ENCODE measurements at regions of chr9 and their contacts with region 1.

Region 1: DNA sequence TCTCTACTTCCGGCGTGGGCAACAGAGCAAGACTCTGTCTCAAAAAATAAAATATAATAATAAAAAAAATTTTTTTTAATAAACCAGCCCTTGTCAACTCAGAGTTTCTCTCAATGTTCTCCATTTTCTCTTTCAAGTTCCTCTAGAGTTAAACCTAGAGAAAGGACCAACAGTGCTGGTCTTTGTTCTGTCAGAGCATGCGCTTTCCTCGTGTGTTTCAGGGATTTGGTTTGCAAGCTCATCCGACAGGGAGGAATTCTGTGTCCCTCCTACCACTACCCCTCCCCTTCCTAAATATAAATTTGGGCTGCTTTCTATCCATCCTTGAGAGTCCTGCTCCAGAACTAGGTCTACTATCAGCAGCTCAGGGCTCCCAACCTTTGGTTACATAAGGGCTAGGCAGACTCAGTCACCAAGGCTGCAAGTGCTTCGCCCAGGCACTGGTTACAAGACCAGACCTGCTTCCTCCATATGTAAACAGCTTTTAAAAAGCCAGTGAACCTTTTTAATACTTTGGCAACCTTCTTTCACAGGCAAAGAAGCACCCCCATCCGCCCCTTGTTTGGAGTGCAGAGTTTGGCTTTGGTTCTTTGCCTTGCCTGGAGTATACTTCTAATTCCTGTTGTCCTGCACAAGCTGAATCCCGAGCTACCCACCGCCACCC is 13.5 kb downstream of the SETX start:
- DNase-seq: no peak
- H3K4me3 ChIP-seq: no peak overlapping the region
- H3K27ac ChIP-seq: no peak overlapping the region
- H3K4me1 ChIP-seq: no peaks in the 10 kb centered on the region
- H3K27me3 ChIP-seq: no peaks in the 10 kb centered on the region
- CTCF ChIP-seq: no peak
- EP300 ChIP-seq: no peak
- POLR2A ChIP-seq: no peak
- RAD21 ChIP-seq: no peak

Region 2: DNA sequence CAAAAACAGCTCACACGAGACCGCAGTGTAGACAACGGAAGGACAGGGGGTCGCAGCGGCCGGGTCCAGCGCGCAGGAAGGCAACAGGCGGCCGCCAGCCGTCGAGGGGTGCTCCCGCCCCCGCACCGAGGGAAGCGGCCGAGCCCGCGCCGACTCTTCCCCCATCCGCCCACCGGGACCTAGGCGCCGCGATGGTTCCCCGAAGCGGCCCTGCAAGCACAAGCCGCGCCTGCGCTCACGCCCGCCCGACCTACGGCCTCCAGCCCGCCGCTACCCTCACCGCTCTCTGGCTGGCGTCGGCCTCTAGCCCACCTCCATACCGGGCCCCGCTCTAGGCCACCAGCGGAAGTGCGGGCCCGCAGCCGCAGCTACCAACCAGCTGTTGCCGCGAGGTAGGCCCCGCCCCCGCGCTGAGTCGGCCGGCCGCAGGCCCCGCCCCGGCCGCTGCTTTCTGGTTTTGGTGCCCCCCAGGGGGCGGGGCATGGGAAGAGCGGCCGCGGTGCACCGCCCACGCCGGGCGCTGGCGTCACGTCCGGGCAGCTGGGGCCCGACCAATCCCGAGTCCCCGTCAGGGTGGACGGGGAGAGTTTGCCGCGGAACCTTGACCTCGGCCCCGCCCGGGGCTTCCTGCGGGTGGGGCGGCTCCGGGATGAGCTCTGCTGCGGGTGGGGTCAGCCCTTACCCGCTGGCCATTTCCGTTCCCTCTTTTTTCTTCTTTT is 13.5 kb after region 1 on chr9 and contains the start of gene SETX:
- CTCF ChIA-PET with region 1: interaction called, 4 read pairs
- POLR2A ChIA-PET with region 1: interaction called, 13 read pairs
- DNase-seq: peak; percentile 92 to 93
- H3K4me3 ChIP-seq: peak within 1 kb of the TSS; percentile 87 to 97 (median 90)
- H3K27ac ChIP-seq: peak within 1 kb of the TSS; percentile 81; the same call in 1 of the 2 replicates
- H3K4me1 ChIP-seq: no peaks in the 10 kb centered on the region; a peak in 1 of 7 replicates
- H3K27me3 ChIP-seq: no peaks in the 10 kb centered on the region
- CTCF ChIP-seq: no peak
- EP300 ChIP-seq: no peak
- POLR2A ChIP-seq: peak; percentile 90 to 92
- RAD21 ChIP-seq: no peak
- total RNA-seq, gene SETX: 33.2 and 37.9 TPM in 2 replicates

Measured in H1 (cell line).